Activated T-helper 2 cell treated with anti-CD3 and anti-CD28 coated beads, Interferon-gamma antibody, Interleukin-2, Interleukin-4, amounts not matched to agents 10 μg/mL and 5 μg/mL and 100 μg/mL, durations not matched to agents 14 hours and 24 hours and 36 hours (primary cell): ENCODE measurements at regions of chr2 and their contacts with region 1.

Region 1: GRCh38 chr2:160406591-160407392 is 86.8 kb downstream of the RBMS1 start:
- DNase-seq: peak; percentile 60
- H3K4me3 Mint-ChIP-seq: peak overlapping the region; percentile 86
- H3K27ac Mint-ChIP-seq: peak overlapping the region; percentile 80
- H3K4me1 Mint-ChIP-seq: peaks cover 74% of the 10 kb centered on the region
- H3K27me3 Mint-ChIP-seq: no peaks in the 10 kb centered on the region

Region 2: GRCh38 chr2:159712143-159712928 is 694.5 kb before region 1 on chr2 and contains the start of gene MARCHF7:
- intact Hi-C with region 1: loop called (anchors 10 kb)
- DNase-seq: peak; percentile 97
- H3K4me3 Mint-ChIP-seq: peak within 1 kb of the TSS; percentile 99
- H3K27ac Mint-ChIP-seq: peak within 1 kb of the TSS; percentile 99
- H3K4me1 Mint-ChIP-seq: peaks cover 36% of the 10 kb centered on the region
- H3K27me3 Mint-ChIP-seq: no peaks in the 10 kb centered on the region
- total RNA-seq, gene MARCHF7: 80.0 and 83.1 TPM in 2 replicates

Region 3: GRCh38 chr2:160332318-160332717 is 74.5 kb before region 1 on chr2:
- intact Hi-C with region 1: loop called (anchors 5 kb)
- DNase-seq: no peak
- H3K4me3 Mint-ChIP-seq: no peak overlapping the region
- H3K27ac Mint-ChIP-seq: peak overlapping the region; percentile 41
- H3K4me1 Mint-ChIP-seq: peaks cover 69% of the 10 kb centered on the region
- H3K27me3 Mint-ChIP-seq: no peaks in the 10 kb centered on the region

Region 4: GRCh38 chr2:160394153-160394552 is 12.6 kb before region 1 on chr2:
- intact Hi-C with region 1: loop called (anchors 1 kb)
- DNase-seq: no peak
- H3K4me3 Mint-ChIP-seq: peak overlapping the region; percentile 49
- H3K27ac Mint-ChIP-seq: peak overlapping the region; percentile 53
- H3K4me1 Mint-ChIP-seq: peaks cover 33% of the 10 kb centered on the region
- H3K27me3 Mint-ChIP-seq: no peaks in the 10 kb centered on the region

Region 5: DNA sequence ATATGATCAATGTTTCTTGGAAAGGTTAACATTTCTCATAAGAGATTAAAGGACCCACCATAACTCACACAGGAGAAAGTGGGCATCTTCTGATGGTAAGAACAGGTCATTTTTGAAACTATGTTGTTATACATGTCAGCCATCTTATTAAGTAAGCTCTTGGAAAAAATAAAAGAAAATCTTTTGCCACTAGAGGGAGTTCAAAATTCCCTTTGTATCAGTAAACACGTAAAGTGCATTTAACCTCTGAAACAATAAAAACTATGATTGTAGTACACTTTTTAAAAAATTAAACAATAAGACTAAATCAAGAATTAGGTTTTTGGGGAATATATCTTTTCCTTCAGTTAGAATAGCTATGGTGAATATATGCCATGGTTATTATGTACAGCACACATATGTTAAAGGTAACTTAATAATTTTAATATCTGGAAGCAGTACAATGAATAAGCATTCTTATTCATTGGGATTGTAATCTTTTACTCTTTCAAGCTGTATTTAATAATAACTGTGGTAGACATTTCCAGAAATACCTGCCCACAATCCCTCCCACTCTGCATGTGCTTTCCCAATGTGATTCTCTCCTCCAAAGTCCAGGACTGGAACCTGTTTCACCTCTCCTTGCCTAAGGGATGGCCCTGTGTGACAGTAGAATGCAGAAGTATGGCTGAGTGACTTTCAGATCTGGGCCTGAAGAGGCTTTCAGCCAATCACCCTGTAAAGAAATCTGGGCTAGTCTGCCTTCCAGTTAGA is 22.6 kb after region 1 on chr2:
- intact Hi-C with region 1: loop called (anchors 1 kb)
- DNase-seq: no peak
- H3K4me3 Mint-ChIP-seq: no peak overlapping the region
- H3K27ac Mint-ChIP-seq: no peak overlapping the region
- H3K4me1 Mint-ChIP-seq: peaks cover 58% of the 10 kb centered on the region
- H3K27me3 Mint-ChIP-seq: no peaks in the 10 kb centered on the region

Region 6: GRCh38 chr2:160493227-160494028 is 86.6 kb after region 1 on chr2 and contains the start of gene RBMS1:
- intact Hi-C with region 1: loop called (anchors 2 kb)
- DNase-seq: peak; percentile 35
- H3K4me3 Mint-ChIP-seq: peak within 1 kb of the TSS; percentile 93
- H3K27ac Mint-ChIP-seq: peak within 1 kb of the TSS; percentile 91
- H3K4me1 Mint-ChIP-seq: peaks cover 43% of the 10 kb centered on the region
- H3K27me3 Mint-ChIP-seq: peaks cover 28% of the 10 kb centered on the region
- total RNA-seq, gene RBMS1: 40.1 and 42.2 TPM in 2 replicates